ENCODE measurements at regions of chr3 and their contacts with region 1.

Region 1: DNA sequence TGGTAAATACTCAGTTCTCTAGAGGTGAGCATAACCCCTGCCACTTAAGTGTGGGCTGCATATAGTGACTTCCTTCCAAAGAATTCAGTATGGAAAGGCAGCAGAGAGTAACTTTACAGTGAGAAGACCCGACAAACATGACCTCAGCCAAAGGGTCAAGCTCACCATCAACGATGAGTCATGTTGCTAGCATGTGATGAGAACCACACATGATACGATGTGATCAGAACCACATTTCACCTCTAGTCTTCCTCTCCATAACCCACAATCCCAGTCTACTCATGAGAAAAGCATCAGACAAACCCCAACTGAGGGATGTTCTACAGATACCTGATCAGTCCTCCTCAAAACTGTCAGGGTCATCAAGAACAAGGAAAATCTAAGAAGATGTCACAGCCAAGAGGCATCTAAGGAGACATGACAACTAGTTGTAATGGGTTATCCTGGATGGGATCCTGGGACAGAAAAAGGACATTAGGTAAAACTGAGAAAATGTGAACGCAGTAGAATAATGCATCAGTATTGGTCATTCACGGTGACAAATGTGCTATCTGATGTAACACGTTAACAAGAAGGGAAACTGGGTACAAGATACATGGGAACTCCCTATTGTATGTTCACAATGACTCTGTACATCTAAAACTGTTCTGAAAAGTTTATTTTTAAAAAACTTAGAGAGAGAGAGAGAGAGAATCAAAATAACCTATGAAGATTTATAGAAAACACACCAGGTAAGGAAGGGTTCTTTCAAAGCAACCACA is 28.3 kb downstream of the SEC61A1 start:
- DNase-seq: no peak
- ATAC-seq: no peak
- H3K4me3 Mint-ChIP-seq: no peak overlapping the region
- H3K27ac Mint-ChIP-seq: no peak overlapping the region
- H3K4me1 Mint-ChIP-seq: peaks cover 10% of the 10 kb centered on the region
- H3K27me3 Mint-ChIP-seq: no peaks in the 10 kb centered on the region
- CTCF ChIP-seq: no peak

Region 2: GRCh38 chr3:128497387-128498126 is 417.1 kb after region 1 on chr3:
- CTCF ChIA-PET with region 1: no interaction called
- POLR2A ChIA-PET with region 1: no interaction called
- intact Hi-C with region 1: loop called (anchors 10 kb)
- DNase-seq: peak; percentile 81
- ATAC-seq: peak; percentile 70
- H3K4me3 Mint-ChIP-seq: peak overlapping the region; percentile 66
- H3K27ac Mint-ChIP-seq: no peak overlapping the region
- H3K4me1 Mint-ChIP-seq: no peaks in the 10 kb centered on the region
- H3K27me3 Mint-ChIP-seq: peaks cover 45% of the 10 kb centered on the region
- CTCF ChIP-seq: peak; percentile 98